Common myeloid progenitor, CD34-positive (primary cell): ENCODE measurements at regions of chr3 and their contacts with region 1.

Region 1: DNA sequence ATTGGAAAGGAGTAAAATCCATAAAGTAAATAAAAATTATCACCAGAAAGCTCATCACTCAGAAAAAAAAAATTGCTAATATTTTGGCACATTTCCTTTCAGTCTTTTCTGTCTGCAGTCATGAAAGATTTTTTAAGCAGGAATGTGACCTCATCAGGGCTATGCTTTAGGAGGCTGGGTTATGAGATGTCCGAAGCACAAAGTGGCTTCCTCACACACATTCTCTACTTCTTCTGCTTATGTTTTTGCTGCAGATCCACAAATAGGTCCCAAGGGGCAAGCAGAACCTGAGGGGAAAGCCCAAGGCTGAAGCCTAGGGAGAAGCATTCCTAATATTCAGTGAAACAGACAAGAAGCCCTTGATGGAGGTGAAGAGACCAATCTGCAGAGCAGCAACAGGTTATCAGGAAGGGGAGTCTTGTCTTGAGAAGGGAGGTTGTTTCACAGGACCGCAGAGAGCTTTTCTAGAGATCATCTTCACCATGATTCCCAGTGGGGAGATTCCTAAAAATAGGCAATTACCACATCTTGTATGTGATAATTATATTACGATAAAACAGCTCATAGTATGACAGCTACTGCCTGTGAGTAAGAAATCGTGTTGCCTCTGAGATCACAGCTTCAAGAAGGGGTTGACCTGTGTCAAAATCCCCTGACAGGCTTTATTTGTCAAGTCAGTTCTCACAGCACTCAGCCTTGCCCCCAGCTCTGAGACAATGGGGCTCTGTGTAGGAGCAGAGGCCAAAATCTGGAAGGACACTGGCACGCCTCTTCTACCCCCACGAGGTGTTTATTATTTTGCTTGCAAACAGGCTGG is 60.5 kb downstream of the IGF2BP2 start:
- DNase-seq: no peak
- H3K4me3 ChIP-seq: peak overlapping the region in 3 of 7 experiments; percentile 37 to 60 (median 52)
- H3K27ac ChIP-seq: peak overlapping the region; percentile 3 to 60
- H3K4me1 ChIP-seq: peaks cover 26 to 82% (median 72%) of the 10 kb centered on the region in 4 experiments
- H3K27me3 ChIP-seq: no peaks in the 10 kb centered on the region

Region 2: DNA sequence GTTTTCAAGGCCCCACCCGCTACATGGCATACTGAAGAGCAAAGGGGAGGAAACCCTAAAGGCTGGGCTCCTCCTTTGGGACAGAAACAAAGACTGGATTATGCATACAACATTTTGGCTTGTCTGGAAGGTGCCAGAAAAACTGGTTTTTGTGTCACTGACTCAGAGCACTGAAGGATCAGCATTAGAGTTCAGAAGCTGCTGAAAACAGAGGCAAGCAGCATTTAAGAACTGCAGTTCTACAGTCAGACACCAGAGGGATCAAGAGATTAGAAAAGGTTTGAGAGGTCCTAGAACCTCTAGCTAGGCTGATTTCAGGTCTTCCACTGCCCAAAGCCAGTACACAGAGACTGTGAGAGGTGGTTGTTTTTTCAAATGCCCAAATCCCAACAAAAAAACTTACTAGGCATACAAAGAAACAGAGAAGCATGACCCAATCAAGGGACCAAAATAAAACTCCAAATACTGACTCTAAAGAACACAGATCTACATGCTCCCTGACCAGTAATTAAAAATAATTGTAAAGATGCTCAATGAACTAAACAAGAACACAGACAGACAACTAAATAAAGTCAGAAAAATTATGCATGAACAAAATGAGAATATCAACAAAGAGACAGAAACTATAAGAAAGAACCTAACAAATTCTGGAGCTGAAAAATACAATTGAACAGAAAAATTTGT is 87.1 kb before region 1 on chr3:
- CTCF ChIA-PET with region 1: interaction called, 27 read pairs
- POLR2A ChIA-PET with region 1: no interaction called
- DNase-seq: peak; percentile 53 to 76 (median 69)
- H3K4me3 ChIP-seq: no peak overlapping the region
- H3K27ac ChIP-seq: no peak overlapping the region
- H3K4me1 ChIP-seq: no peaks in the 10 kb centered on the region
- H3K27me3 ChIP-seq: no peaks in the 10 kb centered on the region

Region 3: GRCh38 chr3:185733980-185734724 is 30.2 kb before region 1 on chr3:
- CTCF ChIA-PET with region 1: interaction called, 114 read pairs
- POLR2A ChIA-PET with region 1: interaction called, 4 read pairs
- DNase-seq: peak; percentile 78 to 82 (median 82)
- H3K4me3 ChIP-seq: no peak overlapping the region
- H3K27ac ChIP-seq: no peak overlapping the region
- H3K4me1 ChIP-seq: peaks cover 0 to 25% (median 18%) of the 10 kb centered on the region in 4 experiments
- H3K27me3 ChIP-seq: no peaks in the 10 kb centered on the region

Region 4: DNA sequence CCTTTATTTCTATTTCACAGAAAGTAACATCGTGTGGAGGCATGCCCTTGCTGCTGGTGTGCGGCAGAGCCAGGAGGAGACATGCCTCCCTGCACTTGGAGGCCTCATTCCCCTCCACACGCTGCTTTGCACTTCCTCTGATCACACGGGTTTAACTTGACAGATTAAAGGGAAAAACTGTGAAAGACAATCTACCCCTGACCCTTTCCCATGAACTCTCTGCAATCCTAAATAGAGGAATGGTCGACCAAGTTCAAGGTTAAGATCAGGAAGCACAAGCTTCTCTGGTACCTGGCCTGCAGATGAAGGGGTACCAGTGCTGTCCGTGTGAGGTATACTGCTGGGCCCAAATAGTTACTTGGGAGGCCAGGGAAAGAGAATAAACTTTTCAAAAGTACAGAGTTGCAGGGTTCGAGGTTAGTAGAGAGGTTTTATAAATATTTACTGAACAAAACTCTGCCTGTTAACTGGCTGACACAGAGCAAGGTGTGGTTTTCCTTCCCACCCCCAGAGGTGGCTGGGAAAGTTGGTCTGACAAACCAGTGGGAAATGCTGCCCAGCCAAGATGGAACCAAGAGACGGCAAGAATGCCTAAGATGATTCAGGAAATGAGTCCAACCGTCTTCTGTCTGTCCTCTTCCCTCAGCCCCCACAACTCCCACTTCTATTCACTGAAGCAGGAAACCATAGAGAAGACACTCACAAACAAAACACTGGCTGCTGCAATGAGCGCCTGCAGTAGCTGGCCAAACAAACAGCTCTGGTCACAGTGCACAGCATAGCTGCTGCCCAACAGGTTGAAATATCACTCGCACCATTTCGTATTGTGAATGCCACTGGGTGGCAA is 19.2 kb before region 1 on chr3:
- CTCF ChIA-PET with region 1: interaction called, 63 read pairs
- POLR2A ChIA-PET with region 1: interaction called, 3 read pairs
- DNase-seq: peak in 1 of 3 donors; percentile 60
- H3K4me3 ChIP-seq: peak overlapping the region in 4 of 7 experiments; percentile 24 to 58 (median 42)
- H3K27ac ChIP-seq: peak overlapping the region; percentile 35 to 79
- H3K4me1 ChIP-seq: peaks cover 25 to 63% (median 51%) of the 10 kb centered on the region in 4 experiments
- H3K27me3 ChIP-seq: no peaks in the 10 kb centered on the region

Region 5: GRCh38 chr3:185781759-185782158 is 17.4 kb after region 1 on chr3:
- CTCF ChIA-PET with region 1: interaction called, 84 read pairs
- POLR2A ChIA-PET with region 1: no interaction called
- DNase-seq: no peak
- H3K4me3 ChIP-seq: no peak overlapping the region
- H3K27ac ChIP-seq: no peak overlapping the region
- H3K4me1 ChIP-seq: no peaks in the 10 kb centered on the region
- H3K27me3 ChIP-seq: no peaks in the 10 kb centered on the region